Activated CD8-positive, alpha-beta T cell treated with anti-CD3 and anti-CD28 coated beads, Interleukin-2, amount 10 ng/mL, durations not matched to agents 7 days and 5 days (primary cell): ENCODE measurements at regions of chr12 and their contacts with region 1.

Region 1: DNA sequence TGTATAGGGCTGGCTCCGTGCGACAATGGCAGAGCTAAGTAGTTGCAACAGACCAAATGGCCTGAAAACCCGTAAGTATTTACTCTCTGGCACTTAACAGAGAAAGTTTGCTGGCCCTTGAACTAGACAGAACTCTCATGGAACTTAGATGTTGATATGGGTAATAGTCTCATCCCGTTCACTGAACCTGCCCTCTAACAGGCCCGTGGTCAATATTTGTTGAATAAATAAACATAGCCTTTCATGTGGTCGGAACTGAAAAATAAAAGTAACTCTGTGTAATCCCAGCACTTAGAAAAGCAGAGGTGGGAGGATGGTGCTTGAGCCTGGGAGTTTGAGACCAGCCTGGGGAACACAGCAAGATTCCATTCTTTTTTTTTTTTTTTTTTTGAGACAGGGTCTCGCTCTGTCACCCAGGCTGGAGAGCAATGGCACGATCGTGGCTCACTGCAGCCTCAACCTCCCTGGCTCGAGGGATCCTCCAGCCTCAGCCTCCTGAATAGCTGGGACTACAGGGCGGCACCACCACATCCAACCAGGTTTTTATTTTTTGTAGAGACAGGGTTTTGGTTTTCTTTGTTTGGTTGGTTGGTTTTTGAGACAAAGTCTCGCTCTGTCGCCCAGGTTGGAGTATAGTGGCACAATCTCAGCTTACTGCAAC is 29.7 kb downstream of the KDM2B start:
- DNase-seq: no peak
- ATAC-seq: no peak
- H3K4me3 Mint-ChIP-seq: no peak overlapping the region
- H3K27ac Mint-ChIP-seq: no peak overlapping the region
- H3K4me1 Mint-ChIP-seq: peaks cover 17% of the 10 kb centered on the region
- H3K27me3 Mint-ChIP-seq: no peaks in the 10 kb centered on the region

Region 2: DNA sequence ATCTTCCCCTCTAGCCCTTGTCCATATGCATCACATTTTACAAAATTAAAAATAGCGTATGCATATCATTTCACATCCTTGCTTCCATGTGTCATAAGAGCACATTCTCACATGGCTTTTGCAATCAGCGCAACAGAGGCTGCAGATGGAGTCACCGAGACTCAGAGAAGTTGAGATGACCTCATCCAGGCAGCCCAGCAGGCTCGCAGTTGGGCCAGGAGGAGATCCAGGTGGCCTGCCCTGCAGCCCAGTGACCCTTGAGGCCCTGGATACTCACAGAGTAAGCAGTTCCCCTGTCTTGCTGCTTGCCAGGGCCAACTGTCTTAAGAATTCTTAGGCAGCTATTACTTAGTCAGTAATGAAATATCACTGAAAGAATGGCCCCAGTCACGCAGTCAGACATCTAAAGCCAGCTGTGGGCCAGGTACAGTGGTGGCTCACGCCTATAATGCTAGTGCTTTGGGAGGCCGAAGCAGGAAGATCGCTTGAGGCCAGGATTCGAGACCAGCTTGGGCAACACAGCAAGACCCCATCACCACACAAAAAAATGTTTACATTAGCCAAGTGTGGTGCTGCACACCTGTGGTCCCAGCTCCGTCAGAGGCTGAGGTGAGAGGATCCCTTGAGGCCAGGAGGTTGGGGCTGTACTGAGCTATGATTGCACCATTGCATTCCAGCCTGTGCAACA is 263.7 kb before region 1 on chr12:
- CTCF ChIA-PET with region 1: no interaction called
- POLR2A ChIA-PET with region 1: no interaction called
- DNase-seq: no peak
- ATAC-seq: no peak
- H3K4me3 Mint-ChIP-seq: no peak overlapping the region
- H3K27ac Mint-ChIP-seq: no peak overlapping the region
- H3K4me1 Mint-ChIP-seq: peaks cover 18% of the 10 kb centered on the region
- H3K27me3 Mint-ChIP-seq: no peaks in the 10 kb centered on the region

Region 3: GRCh38 chr12:121536899-121537813 is 13.9 kb before region 1 on chr12:
- CTCF ChIA-PET with region 1: interaction called, 18 read pairs
- POLR2A ChIA-PET with region 1: interaction called, 3 read pairs
- DNase-seq: peak; percentile 66
- ATAC-seq: peak; percentile 63
- H3K4me3 Mint-ChIP-seq: peak overlapping the region; percentile 74
- H3K27ac Mint-ChIP-seq: peak overlapping the region; percentile 85
- H3K4me1 Mint-ChIP-seq: peaks cover 55% of the 10 kb centered on the region
- H3K27me3 Mint-ChIP-seq: no peaks in the 10 kb centered on the region

Region 4: DNA sequence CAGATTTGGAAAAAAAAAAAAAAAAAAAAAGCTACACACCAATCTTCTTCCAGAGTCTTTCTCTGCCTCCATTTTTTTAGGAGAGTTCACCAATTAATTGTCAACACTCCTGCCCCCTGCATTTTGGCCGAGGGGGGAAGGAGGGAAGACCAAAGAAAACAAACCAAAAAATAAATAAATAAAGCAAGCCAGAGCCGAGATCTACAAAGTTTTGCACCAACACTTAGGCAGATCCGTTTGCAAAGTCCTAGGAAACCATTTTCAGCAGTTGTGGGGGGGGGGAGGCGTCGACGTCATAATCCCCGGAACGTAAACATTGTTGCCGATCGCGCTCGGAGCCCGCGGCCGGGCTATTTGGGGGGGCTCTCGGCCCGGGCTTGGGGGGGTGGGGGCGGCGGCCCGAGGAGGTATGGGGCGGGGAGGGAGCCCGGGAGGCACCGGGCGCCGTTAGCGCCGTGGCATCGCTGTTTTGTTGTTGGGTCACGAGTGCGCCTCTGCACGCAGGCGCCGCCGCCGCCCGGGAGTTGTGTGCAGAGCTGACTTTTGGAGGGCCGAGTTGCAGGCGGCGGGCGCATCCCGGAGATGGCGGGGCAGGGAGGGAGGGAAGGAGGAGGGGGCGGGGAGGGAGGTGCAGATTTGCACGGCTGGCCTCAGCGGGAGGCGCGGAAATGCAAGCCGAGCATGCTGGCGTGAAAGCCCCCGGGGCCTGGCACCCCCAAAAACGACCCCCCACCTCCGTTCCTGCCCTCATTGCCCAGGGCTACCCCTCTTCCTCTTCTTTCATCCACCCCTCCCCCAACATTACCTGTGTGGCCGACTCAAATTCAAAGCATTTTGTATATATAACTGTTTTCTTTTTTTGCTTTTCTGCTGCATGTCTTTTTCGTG is 29.1 kb after region 1 on chr12:
- CTCF ChIA-PET with region 1: interaction called, 21 read pairs
- POLR2A ChIA-PET with region 1: no interaction called
- DNase-seq: peak; percentile 84
- ATAC-seq: peak; percentile 76
- H3K4me3 Mint-ChIP-seq: peak overlapping the region; percentile 98
- H3K27ac Mint-ChIP-seq: peak overlapping the region; percentile 98
- H3K4me1 Mint-ChIP-seq: peaks cover 36% of the 10 kb centered on the region
- H3K27me3 Mint-ChIP-seq: no peaks in the 10 kb centered on the region

Region 5: DNA sequence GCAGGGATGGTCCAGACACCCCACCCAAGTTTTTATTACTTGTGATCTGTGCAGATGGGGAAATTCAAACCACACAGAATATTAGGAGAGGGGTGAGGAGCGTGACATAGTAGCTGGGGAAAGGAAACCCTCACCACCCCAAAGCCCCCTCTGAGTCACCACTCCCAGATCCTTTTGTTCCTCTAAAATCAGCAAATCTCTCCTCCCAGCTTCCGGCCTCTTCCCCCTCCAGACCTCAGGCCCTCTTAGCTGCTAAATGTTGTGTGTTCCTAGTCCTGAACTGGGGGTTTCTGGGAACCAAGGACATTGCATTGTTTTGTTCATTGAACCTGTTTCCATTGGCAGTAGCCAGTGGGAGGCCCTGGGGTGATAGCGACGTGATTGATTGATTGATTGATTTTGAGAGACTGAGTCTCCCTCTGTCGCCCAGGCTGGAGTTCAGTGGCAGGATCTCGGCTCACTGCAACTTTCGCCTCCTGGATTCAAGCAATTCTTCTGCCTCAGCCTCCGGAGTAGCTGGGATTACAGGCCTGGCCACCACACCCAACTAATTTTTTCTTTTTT is 69.3 kb after region 1 on chr12:
- CTCF ChIA-PET with region 1: interaction called, 41 read pairs
- POLR2A ChIA-PET with region 1: no interaction called
- DNase-seq: no peak
- ATAC-seq: no peak
- H3K4me3 Mint-ChIP-seq: no peak overlapping the region
- H3K27ac Mint-ChIP-seq: no peak overlapping the region
- H3K4me1 Mint-ChIP-seq: peaks cover 23% of the 10 kb centered on the region
- H3K27me3 Mint-ChIP-seq: no peaks in the 10 kb centered on the region

Region 6: GRCh38 chr12:121668750-121669520 is 117.8 kb after region 1 on chr12:
- CTCF ChIA-PET with region 1: interaction called, 54 read pairs
- POLR2A ChIA-PET with region 1: interaction called, 4 read pairs
- DNase-seq: peak; percentile 63
- ATAC-seq: no peak
- H3K4me3 Mint-ChIP-seq: no peak overlapping the region
- H3K27ac Mint-ChIP-seq: peak overlapping the region; percentile 61
- H3K4me1 Mint-ChIP-seq: peaks cover 66% of the 10 kb centered on the region
- H3K27me3 Mint-ChIP-seq: no peaks in the 10 kb centered on the region

Region 7: GRCh38 chr12:121678716-121679580 is 127.8 kb after region 1 on chr12:
- CTCF ChIA-PET with region 1: interaction called, 28 read pairs
- POLR2A ChIA-PET with region 1: interaction called, 5 read pairs
- DNase-seq: no peak
- ATAC-seq: no peak
- H3K4me3 Mint-ChIP-seq: peak overlapping the region; percentile 30
- H3K27ac Mint-ChIP-seq: peak overlapping the region; percentile 79
- H3K4me1 Mint-ChIP-seq: peaks cover 18% of the 10 kb centered on the region
- H3K27me3 Mint-ChIP-seq: no peaks in the 10 kb centered on the region

Region 8: DNA sequence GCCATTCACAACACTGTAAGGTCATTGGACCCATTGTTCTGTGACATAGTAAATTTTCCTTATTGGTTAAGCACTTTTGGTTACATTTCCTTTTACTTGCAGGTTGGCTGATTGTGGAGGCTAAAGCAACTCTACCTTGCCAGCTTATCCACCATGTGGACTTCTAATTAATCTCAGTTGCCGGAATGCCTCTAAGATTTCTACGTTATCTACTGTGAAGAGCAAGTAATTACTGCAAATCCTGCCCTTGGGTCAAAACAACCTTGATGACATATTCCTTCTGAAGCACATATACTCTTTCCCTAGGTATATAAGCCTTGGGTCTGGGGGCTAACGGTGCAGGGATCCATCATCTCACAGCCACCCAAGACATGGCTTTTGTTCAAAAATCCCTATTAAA is 137.9 kb after region 1 on chr12:
- CTCF ChIA-PET with region 1: interaction called, 19 read pairs
- POLR2A ChIA-PET with region 1: no interaction called
- DNase-seq: no peak
- ATAC-seq: no peak
- H3K4me3 Mint-ChIP-seq: no peak overlapping the region
- H3K27ac Mint-ChIP-seq: peak overlapping the region; percentile 34
- H3K4me1 Mint-ChIP-seq: peaks cover 14% of the 10 kb centered on the region
- H3K27me3 Mint-ChIP-seq: no peaks in the 10 kb centered on the region